Left cardiac atrium (tissue), 4 donors: ENCODE measurements at regions of chr6 and their contacts with region 1.

Region 1: DNA sequence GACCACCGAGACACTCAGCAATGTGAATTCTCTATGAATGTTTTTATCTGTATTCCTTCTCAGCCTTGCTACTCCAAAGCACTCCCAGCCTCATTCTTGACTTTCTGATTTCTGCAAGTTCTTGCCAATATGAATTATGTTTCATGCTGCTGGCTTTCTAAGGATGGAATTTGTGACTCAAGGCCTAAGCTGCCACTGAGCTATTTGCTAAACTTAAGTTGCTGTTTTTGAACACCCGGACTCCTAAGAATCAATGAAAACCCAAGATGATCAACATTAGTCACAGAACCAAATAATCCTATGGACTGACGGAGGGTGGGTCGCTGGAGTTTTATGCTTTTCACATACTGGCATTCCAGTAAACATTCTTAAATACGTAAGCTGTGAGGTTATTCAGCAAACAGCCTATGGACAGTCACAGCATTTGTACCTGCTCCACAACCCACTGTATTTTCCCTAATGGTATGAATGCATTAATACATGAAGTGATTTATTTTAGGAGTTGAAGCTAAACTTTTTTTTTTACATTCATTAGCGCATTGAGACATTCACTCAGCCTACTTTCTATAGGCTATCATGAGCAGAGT is 8.2 kb upstream of the PXDC1 start:
- DNase-seq: no peak
- ATAC-seq: no peak

Region 2: DNA sequence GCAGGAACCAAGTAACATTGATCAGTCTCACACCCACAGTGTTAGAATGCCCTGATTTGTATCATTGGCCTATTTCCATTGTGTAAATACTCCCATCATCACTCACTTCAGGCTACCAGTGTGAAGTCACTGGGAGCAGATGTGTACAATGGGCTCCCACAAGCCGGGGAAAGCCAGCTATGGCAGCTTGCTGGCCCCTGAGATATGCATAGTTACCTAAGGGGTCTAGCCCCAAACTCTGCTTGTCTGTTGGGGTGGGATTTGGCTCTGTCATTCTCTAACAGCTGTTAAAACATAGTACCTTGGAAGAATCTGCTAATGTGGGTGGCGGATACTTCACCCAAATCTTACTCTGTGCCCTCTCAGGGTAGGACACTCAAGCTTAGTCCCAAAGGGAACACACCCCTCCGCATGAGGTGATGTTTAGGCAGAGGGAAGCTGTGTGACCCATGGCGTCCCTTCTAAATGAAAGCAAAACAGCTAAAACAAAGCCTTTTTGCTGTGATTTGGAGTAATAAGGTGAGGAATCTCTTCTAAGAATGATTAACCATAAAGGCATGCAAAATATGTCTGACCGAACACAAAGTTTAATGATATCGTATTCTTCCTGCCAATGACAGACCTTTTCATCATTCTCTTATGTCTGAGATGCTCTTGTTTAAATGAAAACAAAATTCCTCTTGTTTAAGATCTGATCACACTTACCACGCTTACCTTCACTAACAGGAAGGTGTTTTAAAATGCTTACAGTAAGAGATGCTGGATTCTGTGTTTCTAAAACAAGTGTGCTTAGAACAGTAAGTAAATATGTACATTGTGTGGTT is 37.7 kb after region 1 on chr6:
- intact Hi-C with region 1: loop called in 1 of 2 experiments (anchors 5 kb)
- DNase-seq: no peak
- ATAC-seq: peak in 1 of 2 donors; percentile 52

Region 3: DNA sequence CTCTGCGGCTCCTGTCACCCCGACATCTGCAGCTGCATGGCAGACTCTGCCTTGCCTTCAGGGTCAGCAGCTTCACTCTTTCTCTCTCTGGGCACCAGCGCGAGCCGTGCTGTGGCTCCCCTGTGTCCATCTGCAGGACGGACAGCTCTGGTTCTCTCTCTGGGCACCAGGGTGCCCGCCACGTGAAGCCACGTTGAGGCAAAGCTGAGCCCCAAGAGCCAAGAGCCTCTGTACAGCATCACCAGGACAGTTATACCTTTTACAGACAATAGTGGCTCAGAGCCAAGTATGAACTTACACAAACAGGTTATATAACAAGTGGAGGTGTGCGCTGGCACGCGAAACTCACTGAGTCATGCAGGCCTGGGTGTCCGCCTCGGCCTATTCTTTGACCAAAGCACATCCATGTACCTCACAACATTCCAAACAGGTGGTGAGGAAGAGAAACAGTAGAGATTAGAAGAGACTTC is 140.3 kb after region 1 on chr6:
- intact Hi-C with region 1: no loop called
- DNase-seq: no peak
- ATAC-seq: no peak